IMR-90 (cell line): ENCODE measurements at regions of chr7 and their contacts with region 1.

Region 1: GRCh38 chr7:24812310-24812945 is 55.2 kb upstream of the GSDME start:
- DNase-seq: peak; percentile 36
- ATAC-seq: peak; percentile 95
- H3K4me3 ChIP-seq: no peak overlapping the region
- H3K27ac ChIP-seq: no peak overlapping the region
- H3K4me1 ChIP-seq: no peaks in the 10 kb centered on the region
- H3K27me3 ChIP-seq: no peaks in the 10 kb centered on the region
- CTCF ChIP-seq: peak; percentile 85
- POLR2A ChIP-seq: no peak
- RAD21 ChIP-seq: peak; percentile 77

Region 2: DNA sequence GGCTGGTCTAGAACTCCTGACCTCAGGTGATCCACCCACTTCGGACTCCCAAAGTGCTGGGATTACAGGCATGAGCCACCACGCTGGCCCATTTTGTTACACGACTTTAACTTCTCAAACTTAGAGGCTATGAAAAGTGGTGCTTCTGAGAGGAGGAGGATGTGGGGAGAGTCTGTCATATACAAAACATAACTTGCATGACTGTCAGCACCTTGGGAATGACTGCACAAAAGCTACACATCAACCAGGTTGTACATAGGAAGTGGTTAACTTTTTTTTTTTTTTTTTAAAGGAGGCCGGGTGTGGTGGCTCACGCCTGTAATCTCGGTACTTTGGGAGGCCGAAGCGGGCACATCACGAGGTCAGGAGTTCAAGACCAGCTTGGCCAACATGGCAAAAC is 11.8 kb before region 1 on chr7:
- CTCF ChIA-PET with region 1: interaction called, 11 read pairs
- POLR2A ChIA-PET with region 1: no interaction called
- dilution Hi-C with region 1: no loop called
- in situ Hi-C with region 1: no loop called
- intact Hi-C with region 1: no loop called
- DNase-seq: no peak
- ATAC-seq: no peak
- H3K4me3 ChIP-seq: no peak overlapping the region
- H3K27ac ChIP-seq: no peak overlapping the region
- H3K4me1 ChIP-seq: peaks cover 4% of the 10 kb centered on the region; the same call in 1 of the 2 replicates
- H3K27me3 ChIP-seq: no peaks in the 10 kb centered on the region
- CTCF ChIP-seq: no peak
- POLR2A ChIP-seq: no peak
- RAD21 ChIP-seq: no peak

Region 3: DNA sequence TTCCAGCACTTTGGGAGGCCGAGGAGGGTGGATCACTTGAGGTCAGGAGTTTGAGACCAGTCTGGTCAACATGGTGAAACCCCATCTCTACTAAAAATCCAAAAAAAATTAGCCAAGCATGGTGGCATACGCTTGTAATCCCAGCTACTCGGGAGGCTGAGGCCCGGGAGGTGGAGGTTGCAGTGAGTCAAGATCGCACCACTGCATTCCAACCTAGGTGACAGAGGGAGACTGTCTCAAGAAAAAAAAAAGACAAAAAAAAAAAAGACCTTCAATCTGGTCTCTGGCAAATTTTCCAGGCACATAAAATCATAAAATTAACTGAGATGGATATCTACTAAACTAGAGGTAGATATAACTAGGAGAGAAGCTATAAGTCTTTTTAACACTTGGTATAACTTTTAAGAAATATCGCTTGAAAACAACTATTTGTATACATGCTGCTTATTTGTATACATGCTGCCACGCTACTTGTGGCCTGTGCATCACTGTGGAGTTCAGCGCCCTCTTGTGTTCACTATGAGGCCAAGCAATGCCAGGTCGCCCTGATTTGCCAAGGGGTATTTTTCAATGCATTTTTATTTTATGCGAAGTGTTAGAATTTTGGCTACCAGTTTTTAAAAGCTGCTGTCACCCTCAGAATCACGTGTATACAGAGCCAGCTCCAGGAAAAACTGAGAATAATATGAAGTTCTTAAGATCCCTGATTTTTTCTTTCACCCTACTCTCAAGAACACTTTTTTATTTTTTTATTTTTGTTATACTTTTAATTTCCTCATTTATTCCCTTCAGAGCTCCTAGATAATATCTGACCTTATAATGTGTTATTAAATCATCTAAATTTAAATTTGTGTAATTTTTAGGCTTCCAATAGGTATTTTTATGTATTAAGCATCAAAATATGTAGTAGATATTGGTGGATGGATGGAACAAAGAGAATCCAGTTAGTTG is 285.9 kb after region 1 on chr7:
- CTCF ChIA-PET with region 1: interaction called, 54 read pairs
- POLR2A ChIA-PET with region 1: no interaction called
- dilution Hi-C with region 1: loop called (anchors 25 kb)
- in situ Hi-C with region 1: loop called (anchors 5 kb)
- intact Hi-C with region 1: loop called (anchors 1 kb)
- DNase-seq: peak; percentile 75
- ATAC-seq: peak; percentile 82
- H3K4me3 ChIP-seq: no peak overlapping the region
- H3K27ac ChIP-seq: no peak overlapping the region
- H3K4me1 ChIP-seq: no peaks in the 10 kb centered on the region
- H3K27me3 ChIP-seq: no peaks in the 10 kb centered on the region
- CTCF ChIP-seq: peak; percentile 96
- POLR2A ChIP-seq: no peak
- RAD21 ChIP-seq: peak; percentile 85

Region 4: GRCh38 chr7:26071622-26072456 is 1259.4 kb after region 1 on chr7:
- CTCF ChIA-PET with region 1: no interaction called
- POLR2A ChIA-PET with region 1: no interaction called
- dilution Hi-C with region 1: no loop called
- in situ Hi-C with region 1: no loop called
- intact Hi-C with region 1: no loop called
- DNase-seq: no peak
- ATAC-seq: no peak
- H3K4me3 ChIP-seq: no peak overlapping the region
- H3K27ac ChIP-seq: no peak overlapping the region
- H3K4me1 ChIP-seq: no peaks in the 10 kb centered on the region
- H3K27me3 ChIP-seq: peaks cover 16% of the 10 kb centered on the region
- CTCF ChIP-seq: no peak
- POLR2A ChIP-seq: no peak
- RAD21 ChIP-seq: no peak